PC-9 (cell line): ENCODE measurements at regions of chr6 and their contacts with region 1.

Region 1: GRCh38 chr6:15121977-15122550 is 123.8 kb upstream of the JARID2 start:
- DNase-seq: no peak
- H3K4me3 ChIP-seq: no peak overlapping the region
- H3K27ac ChIP-seq: no peak overlapping the region
- H3K4me1 ChIP-seq: no peaks in the 10 kb centered on the region
- H3K27me3 ChIP-seq: no peaks in the 10 kb centered on the region
- CTCF ChIP-seq: no peak

Region 2: DNA sequence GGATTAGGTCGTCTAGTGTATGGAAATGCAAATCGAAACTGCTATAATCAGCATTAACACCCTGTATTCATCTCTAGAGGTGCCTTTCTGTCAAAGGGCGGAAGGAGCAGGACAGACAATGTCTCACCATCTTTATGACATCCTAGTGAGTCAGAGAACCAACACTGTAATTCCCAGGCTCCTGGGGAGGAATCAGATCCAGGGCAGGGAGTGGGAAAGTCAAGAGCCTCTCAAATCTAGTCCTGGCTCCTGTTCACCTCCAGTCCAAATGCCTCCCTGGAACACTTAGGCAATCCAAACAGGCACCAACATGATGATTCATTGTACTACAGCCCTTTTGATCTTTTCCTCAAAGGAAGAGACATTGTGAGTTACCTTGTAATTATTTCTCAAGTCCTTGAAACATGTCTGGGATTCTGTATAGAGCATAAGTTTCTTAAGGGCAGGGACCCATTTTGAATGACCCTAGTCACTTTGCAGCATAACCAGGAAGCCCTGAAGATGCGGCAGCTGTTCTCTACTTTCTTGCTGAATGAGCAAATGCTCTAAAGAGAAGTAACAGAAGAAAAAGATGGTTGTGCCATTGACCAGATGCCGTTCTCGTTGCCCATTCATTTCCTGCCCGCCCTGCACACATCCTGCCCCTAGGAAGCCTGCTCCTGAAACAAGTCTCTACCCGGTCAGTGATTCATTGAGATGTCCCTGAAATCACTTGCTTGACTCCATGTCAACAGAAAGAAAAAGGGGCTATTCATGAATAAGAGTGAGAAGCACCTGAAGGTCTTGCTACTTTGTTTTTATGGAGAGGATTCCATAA is 11.0 kb after region 1 on chr6:
- CTCF ChIA-PET with region 1: no interaction called
- POLR2A ChIA-PET with region 1: interaction called, 10 read pairs
- intact Hi-C with region 1: no loop called
- DNase-seq: peak; percentile 40 to 86
- H3K4me3 ChIP-seq: peak overlapping the region; percentile 33; the same call in 1 of the 2 replicates
- H3K27ac ChIP-seq: peak overlapping the region; percentile 78
- H3K4me1 ChIP-seq: peaks cover 21% of the 10 kb centered on the region
- H3K27me3 ChIP-seq: no peaks in the 10 kb centered on the region
- CTCF ChIP-seq: no peak